AG04450 (cell line): ENCODE measurements at regions of chr11 and their contacts with region 1.

Region 1: DNA sequence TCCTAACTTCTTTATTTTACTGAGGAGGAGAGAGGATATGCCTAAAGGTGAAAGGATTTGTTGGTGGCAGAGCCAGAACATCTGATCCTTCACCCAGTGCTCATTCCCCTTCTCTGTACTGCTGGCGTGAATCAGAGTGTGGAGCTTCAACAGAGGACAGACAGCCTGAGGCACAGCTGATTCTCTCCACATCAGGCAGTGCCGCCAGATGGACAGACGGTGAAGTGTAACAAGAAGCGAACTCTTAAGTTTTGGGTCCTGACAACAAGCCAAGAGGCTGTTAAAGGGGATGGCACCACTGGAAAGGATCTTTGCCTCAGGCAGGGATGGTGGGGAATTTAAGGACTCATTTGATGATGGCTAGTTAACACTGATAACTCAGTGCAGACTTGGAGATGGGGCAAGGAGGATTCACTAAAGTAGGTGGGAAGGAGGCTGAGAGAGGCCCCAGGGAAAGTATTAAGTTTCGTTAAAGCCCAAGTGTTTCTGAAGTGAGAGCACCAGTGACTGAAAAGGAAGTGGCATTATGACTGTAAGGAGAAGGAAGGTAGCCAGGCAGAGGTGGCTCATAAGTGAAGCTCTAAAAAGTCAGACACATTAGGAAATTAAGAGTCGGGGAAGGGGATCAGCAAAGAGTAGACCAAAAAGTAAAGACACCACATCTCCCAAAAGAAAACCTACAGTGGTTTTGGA is 81.3 kb downstream of the CLPB start:
- DNase-seq: peak; percentile 67
- H3K4me3 ChIP-seq: no peak overlapping the region
- H3K27ac ChIP-seq: no peak overlapping the region
- H3K27me3 ChIP-seq: no peaks in the 10 kb centered on the region
- CTCF ChIP-seq: peak; percentile 79

Region 2: DNA sequence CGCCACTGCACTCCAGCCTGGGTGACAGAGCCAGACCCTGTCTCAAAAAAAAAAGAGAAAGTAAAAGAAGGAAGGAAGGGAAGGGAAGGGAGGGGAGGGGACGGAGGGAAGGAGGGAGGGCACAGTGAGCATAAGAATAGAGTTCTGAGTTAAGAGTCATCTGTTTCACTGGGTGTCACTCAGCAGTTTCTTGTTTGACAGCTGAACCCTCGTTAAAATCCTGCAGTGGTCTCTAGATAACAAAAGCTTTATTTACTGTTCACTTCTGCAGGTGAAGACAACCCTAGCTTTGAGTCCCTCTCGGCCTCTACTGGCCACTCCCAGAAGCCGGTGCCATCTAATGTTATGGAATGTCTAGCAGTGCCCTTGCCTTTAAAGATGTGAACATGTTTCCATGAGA is 10.1 kb after region 1 on chr11:
- CTCF ChIA-PET with region 1: interaction called, 12 read pairs
- POLR2A ChIA-PET with region 1: no interaction called
- DNase-seq: no peak
- H3K4me3 ChIP-seq: no peak overlapping the region
- H3K27ac ChIP-seq: no peak overlapping the region
- H3K27me3 ChIP-seq: no peaks in the 10 kb centered on the region
- CTCF ChIP-seq: no peak